ENCODE measurements at regions of chr1 and their contacts with region 1.

Region 1: GRCh38 chr1:212477014-212477679 is 44.4 kb downstream of the NENF start:
- DNase-seq: peak; percentile 85
- H3K4me3 ChIP-seq: no peak overlapping the region
- H3K27ac ChIP-seq: no peak overlapping the region
- H3K4me1 ChIP-seq: no peaks in the 10 kb centered on the region
- CTCF ChIP-seq: peak; percentile 93

Region 2: GRCh38 chr1:212158912-212159796 is 318.0 kb before region 1 on chr1:
- CTCF ChIA-PET with region 1: no interaction called
- POLR2A ChIA-PET with region 1: no interaction called
- intact Hi-C with region 1: no loop called
- DNase-seq: no peak
- H3K4me3 ChIP-seq: no peak overlapping the region
- H3K27ac ChIP-seq: no peak overlapping the region
- H3K4me1 ChIP-seq: no peaks in the 10 kb centered on the region
- CTCF ChIP-seq: no peak

Region 3: DNA sequence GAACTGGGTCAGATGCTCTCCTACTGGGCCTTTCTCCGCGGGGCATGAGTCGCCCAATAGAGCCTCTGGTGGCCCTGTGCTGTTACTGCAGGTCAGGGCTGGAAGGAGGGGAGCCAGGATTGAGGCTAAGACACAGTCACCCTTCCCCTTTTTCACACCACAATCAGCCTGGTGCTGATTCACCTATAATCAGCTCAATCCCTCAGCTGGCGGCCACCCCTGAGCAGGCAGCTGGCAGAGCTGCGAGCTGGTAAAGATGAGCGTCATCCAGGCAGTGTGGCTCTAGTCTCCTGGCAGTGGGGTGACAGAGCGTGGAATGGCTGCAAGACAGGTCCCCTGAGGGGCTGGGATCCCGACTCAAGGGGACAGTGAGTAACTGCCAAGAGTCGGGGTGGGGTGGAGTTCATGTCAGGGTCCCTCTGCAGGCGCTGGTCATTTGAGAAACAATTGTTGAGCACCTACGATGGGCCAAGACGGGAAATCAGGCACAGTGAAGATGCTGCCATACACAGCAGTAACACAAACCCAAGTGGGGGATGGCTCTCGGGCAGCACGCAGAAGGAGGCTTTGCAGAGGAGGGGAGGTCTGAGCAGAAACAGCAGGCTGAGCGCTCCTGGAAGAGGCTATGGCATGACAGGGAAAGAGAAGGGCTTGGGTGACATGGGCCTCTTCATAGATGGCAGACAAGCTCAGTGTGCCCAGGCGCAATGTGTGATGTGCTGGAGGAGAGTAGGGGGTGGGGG is 153.2 kb after region 1 on chr1:
- CTCF ChIA-PET with region 1: no interaction called
- POLR2A ChIA-PET with region 1: no interaction called
- intact Hi-C with region 1: loop called (anchors 5 kb)
- DNase-seq: peak; percentile 69
- H3K4me3 ChIP-seq: no peak overlapping the region
- H3K27ac ChIP-seq: no peak overlapping the region
- H3K4me1 ChIP-seq: no peaks in the 10 kb centered on the region
- CTCF ChIP-seq: peak; percentile 79

Region 4: DNA sequence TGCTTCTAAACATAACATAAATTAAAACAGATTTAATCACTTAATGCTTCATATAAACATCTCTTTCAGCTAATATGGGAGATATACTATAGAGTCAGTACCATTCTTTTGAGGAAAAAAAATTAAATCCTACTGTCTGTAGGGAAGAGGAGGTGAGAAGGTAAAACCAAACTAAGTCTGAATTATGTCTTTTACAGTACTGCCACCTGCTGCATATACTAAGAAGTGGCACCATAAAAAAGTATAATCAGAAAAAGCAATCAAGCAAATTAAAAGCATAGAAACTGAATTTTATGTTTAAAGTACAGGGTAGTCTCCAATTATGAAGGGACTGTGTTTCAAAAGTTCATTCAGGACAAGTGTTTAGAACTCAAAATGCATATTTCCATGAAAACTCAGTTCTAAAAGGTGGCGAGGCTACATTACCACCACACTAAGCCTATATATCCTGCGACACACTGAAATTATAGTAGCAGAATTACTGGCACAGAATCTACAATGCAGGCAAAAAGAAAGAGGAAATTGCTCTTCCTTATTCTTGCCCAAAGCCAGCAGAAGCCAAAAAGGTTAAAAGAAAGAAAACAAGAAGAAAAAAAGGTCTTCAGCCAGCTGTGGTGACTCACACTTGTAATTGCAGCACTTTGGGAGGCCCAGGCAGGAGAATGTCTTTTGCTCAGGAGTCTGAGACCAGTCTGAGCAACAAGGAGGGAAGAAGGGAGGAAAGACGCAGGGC is 305.4 kb after region 1 on chr1:
- CTCF ChIA-PET with region 1: no interaction called
- POLR2A ChIA-PET with region 1: no interaction called
- intact Hi-C with region 1: loop called (anchors 2 kb)
- DNase-seq: peak; percentile 42
- H3K4me3 ChIP-seq: no peak overlapping the region
- H3K27ac ChIP-seq: no peak overlapping the region
- H3K4me1 ChIP-seq: no peaks in the 10 kb centered on the region
- CTCF ChIP-seq: peak; percentile 89